Gastrocnemius medialis (tissue), 4 donors: ENCODE measurements at regions of chr20 and their contacts with region 1.

Region 1: DNA sequence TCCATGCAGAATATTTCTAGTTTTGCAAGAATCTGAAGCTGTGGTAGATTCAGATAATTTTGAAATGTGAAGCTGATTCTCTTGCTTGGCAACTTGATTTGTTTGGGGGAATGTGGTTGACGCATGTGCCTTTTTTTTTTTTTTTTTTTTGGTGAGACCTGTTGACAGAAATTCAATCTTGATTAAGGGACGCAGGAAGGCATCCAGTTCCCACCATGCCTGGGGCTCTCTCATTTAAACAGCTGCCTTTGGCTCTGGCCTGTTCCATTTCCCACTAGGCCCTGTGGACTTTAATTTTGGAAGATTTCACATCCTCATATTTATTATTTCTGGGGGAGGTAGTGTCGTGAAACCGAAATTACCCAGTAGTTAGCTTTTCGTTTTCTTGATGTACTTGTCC is 8.6 kb downstream of the TPX2 start:
- DNase-seq: peak; percentile 39 to 76
- ATAC-seq: peak; percentile 67 to 83
- H3K4me3 ChIP-seq: peak overlapping the region in 1 of 4 donors; percentile 11
- H3K27ac ChIP-seq: peak overlapping the region; percentile 79 to 88 (median 83)
- H3K4me1 ChIP-seq: peaks cover 32 to 46% of the 10 kb centered on the region in 2 donors
- H3K27me3 ChIP-seq: no peaks in the 10 kb centered on the region
- CTCF ChIP-seq: no peak
- POLR2A ChIP-seq: no peak

Region 2: DNA sequence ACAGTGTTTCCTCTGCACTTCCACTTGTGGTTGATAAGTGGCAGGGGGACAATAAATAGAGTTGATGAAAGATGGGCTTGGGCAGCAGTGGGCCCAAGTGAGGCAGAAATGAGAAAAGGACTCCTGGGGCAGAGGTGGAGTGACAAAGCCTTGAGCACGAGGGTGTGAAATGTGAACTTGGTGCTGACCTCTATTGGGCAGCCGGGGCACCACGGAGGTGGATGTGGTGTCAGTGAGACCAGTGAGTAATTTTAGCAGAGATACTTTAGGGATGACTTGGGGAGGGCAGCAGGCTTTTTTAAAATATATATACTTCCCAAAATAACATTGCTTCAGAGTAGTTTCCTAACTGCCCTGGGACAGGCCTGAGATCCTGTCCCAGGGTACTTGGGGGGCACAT is 40.9 kb after region 1 on chr20:
- in situ Hi-C with region 1: no loop called
- intact Hi-C with region 1: loop called (anchors 5 kb)
- DNase-seq: peak; percentile 11 to 62
- ATAC-seq: peak; percentile 90 to 97
- H3K4me3 ChIP-seq: no peak overlapping the region
- H3K27ac ChIP-seq: peak overlapping the region in 2 of 4 donors; percentile 29 to 65
- H3K4me1 ChIP-seq: peaks cover 0 to 6% of the 10 kb centered on the region in 2 donors
- H3K27me3 ChIP-seq: no peaks in the 10 kb centered on the region
- CTCF ChIP-seq: no peak
- POLR2A ChIP-seq: no peak

Region 3: DNA sequence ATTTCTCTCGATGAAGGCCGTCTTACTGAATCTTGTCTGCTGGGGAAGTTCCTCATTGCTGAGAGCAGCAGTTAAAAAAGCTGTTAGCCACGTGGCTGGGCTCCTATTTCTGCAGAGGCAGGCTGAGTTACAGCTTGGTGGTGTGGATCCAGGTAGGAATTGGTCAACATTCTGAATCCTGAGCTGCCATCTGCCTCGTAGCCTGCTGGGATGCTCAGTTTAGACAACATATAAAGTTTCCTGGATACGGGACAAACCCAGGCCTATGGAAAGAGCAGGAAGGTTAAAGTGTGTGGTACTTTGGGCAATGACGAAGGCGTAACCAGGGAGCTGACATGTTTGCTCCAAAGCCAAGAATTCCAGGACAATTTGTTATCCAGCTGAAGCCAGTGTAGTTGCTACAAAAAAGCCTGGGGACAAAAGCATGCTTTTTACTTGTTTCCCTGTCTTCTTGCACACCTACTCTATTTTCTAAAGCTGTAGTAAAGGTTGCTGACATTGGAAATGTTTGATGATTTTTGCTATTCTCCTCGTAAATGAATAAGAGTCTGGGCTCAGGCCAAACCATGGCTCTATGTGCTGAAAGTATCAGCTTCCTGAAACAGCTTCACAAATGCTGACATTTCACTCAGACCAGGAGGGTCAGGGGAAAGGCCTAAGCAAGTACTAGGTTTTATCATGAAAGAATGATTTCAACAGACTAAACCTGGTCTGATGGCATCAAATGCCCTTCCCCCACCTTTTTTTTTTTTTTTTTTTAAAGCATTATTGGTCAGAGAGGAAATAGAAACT is 59.1 kb after region 1 on chr20:
- in situ Hi-C with region 1: loop called in 1 of 4 experiments (anchors 10 kb)
- intact Hi-C with region 1: loop called (anchors 2 kb)
- DNase-seq: peak; percentile 76 to 90
- ATAC-seq: peak; percentile 90 to 95
- H3K4me3 ChIP-seq: no peak overlapping the region
- H3K27ac ChIP-seq: peak overlapping the region; percentile 89 to 95 (median 93)
- H3K4me1 ChIP-seq: peaks cover 52 to 53% of the 10 kb centered on the region in 2 donors
- H3K27me3 ChIP-seq: no peaks in the 10 kb centered on the region
- CTCF ChIP-seq: no peak
- POLR2A ChIP-seq: no peak